Panc1 (cell line): ENCODE measurements at regions of chr10 and their contacts with region 1.

Region 1: DNA sequence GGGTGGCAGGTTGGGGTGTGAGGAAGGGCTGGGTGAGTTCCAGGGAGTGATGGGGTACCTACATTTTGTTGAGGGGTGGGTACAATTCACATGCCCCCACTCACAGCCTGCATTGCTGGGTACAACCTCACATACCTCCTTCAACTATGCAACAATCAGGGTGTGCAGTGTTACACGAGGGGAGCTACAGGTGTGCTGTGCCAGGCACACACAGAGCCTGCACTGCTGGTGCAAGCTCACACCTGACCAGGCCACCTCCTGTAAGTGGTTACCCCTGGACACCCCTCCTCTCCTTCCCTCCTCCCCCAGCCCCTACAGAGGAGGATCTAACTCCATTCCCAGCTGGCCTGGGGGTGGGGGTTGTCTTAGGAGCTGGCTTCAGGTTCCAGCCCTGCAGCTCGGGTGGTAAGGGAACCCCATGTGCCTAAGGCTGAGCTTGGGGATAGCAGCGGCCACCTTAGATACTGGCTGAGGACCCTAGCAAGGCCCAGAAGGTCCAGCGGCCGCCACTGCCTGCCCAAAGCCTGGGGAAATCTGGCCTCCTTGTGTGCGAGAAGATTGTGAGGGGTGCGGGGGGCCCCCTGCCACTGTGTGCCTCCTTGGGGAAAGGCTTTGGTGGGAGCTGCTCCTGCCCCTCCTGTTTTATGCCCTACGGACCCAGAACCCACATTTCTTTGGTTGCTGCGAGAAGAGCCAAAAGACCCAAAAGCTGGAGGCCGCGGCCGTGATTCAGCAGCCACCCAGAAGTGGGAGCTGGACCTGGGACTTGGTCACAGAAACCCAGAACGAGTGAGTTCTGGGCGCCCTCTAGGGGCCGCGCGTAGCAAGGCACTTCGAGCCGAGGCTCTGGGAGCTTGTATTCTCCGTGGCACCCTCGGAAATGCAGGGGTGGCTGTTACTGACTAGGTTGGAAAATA is 10.8 kb downstream of the TLX1 start:
- DNase-seq: peak; percentile 48
- ATAC-seq: peak; percentile 94
- H3K4me3 ChIP-seq: peak overlapping the region in 1 of 2 experiments; percentile 4; a peak in 1 of 4 replicates
- H3K27ac ChIP-seq: 0 out of 2 replicates have a peak overlapping the region, but pooled peaks have one; percentile 13
- H3K4me1 ChIP-seq: peaks cover 6% of the 10 kb centered on the region
- H3K27me3 ChIP-seq: no peaks in the 10 kb centered on the region
- CTCF ChIP-seq: peak; percentile 100

Region 2: GRCh38 chr10:100894033-100894432 is 247.8 kb before region 1 on chr10:
- CTCF ChIA-PET with region 1: no interaction called
- POLR2A ChIA-PET with region 1: interaction called, 14 read pairs
- in situ Hi-C with region 1: no loop called
- intact Hi-C with region 1: no loop called
- DNase-seq: no peak
- ATAC-seq: no peak
- H3K4me3 ChIP-seq: no peak overlapping the region
- H3K27ac ChIP-seq: no peak overlapping the region
- H3K4me1 ChIP-seq: peaks cover 6% of the 10 kb centered on the region
- H3K27me3 ChIP-seq: peaks cover 4% of the 10 kb centered on the region; the same call in 1 of the 2 replicates
- CTCF ChIP-seq: no peak

Region 3: DNA sequence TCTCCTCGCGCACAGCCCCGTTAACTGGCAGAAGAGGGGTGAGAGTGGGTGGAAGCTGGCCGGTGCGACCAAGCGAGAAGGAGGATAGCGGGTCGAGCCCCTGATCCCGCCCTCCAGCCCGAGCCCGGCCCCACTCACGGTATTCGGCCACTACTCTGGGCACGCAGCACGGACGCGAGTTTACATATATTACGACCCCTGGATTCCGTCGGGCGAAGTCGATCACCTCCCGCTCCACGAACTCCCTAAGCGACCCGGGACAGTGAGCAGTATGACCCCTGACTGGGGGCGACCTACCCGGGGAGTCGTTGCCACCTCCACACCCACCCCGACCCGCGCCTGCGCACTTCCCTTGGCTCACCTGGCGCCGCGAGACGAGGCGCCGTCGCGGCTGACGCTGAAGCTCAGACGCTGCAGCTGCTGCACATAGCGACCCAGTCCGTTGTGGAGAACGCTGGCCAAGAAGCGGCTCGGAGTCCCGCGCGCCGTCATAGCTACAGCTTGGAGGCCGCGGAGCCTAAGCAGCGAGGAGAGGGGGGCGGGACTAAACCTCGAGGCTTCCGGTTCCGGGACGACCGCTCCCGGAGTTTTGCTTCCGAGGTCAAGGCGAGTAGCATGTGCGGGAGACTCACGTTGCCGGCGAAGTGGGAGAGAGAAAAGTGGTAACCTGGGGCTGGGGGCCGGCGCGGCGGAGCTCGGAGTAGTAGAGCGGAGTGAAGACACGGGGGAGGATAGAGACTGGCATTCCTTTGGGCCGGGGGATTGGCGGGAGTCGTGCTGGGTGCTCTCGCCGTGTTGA is 154.7 kb before region 1 on chr10 and contains the starts of genes MRPL43 and TWNK:
- CTCF ChIA-PET with region 1: no interaction called
- POLR2A ChIA-PET with region 1: no interaction called
- in situ Hi-C with region 1: no loop called
- intact Hi-C with region 1: no loop called
- DNase-seq: no peak
- ATAC-seq: peak; percentile 95
- H3K4me3 ChIP-seq: peak within 1 kb of the TSS; percentile 84 to 98
- H3K27ac ChIP-seq: peak within 1 kb of the TSS; percentile 95
- H3K4me1 ChIP-seq: peaks cover 30% of the 10 kb centered on the region
- H3K27me3 ChIP-seq: no peaks in the 10 kb centered on the region
- CTCF ChIP-seq: no peak
- total RNA-seq, gene MRPL43: 108 TPM
- total RNA-seq, gene TWNK: 30.5 TPM

Region 4: GRCh38 chr10:101060036-101060950 is 81.6 kb before region 1 on chr10:
- CTCF ChIA-PET with region 1: interaction called, 33 read pairs
- POLR2A ChIA-PET with region 1: no interaction called
- in situ Hi-C with region 1: no loop called
- intact Hi-C with region 1: no loop called
- DNase-seq: peak; percentile 86
- ATAC-seq: peak; percentile 72
- H3K4me3 ChIP-seq: peak overlapping the region; percentile 76 to 77
- H3K27ac ChIP-seq: peak overlapping the region; percentile 99
- H3K4me1 ChIP-seq: peaks cover 44% of the 10 kb centered on the region
- H3K27me3 ChIP-seq: no peaks in the 10 kb centered on the region
- CTCF ChIP-seq: peak; percentile 98

Region 5: DNA sequence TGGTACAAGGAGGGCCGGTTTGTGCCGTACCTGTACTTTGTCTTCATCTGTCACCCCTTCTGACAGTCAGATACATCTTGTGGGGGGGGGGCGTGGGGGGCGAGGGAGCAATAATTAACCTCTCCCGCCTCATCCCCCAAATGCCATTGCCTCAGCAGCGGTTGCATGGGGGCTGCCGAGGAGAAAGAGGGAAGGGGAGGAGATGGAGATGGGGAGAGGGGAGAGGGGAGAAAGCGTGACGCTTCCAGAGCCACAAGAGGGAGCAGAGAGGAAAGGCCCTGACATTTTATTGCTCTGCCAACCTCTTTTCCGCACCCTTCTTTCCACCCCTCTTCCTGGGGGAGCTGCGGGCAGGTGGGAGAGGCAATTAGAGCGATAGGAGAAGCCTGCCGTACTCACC is 68.2 kb before region 1 on chr10:
- CTCF ChIA-PET with region 1: interaction called, 18 read pairs
- POLR2A ChIA-PET with region 1: interaction called, 3 read pairs
- in situ Hi-C with region 1: no loop called
- intact Hi-C with region 1: no loop called
- DNase-seq: no peak
- ATAC-seq: no peak
- H3K4me3 ChIP-seq: no peak overlapping the region
- H3K27ac ChIP-seq: no peak overlapping the region
- H3K4me1 ChIP-seq: no peaks in the 10 kb centered on the region
- H3K27me3 ChIP-seq: peaks cover 2% of the 10 kb centered on the region; the same call in 1 of the 2 replicates
- CTCF ChIP-seq: no peak; the same call in 1 of the 2 replicates

Region 6: DNA sequence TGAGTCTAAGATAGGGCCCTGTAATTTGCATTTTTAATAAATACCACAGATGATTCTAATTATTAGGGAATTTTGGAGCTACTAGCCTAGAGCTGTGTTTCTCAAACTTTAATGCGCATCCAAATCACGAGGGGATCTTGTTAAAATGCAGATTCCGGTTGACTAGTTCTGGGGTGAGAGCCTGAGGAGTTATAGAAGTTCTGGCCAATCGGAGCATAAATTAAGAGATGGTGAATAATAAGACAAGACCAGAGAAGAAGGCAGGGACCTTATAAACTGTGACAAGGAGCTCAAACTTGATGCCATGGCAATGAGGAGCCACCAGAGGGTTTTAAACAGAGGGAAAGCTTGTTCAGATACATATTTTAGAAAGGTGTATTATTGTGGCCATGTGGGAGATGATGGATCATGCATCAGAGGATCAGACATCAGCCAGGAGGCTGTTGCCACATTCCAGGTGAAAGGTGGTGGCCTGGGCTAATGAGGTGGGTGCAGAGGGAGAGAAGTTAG is 40.4 kb before region 1 on chr10:
- CTCF ChIA-PET with region 1: interaction called, 206 read pairs
- POLR2A ChIA-PET with region 1: interaction called, 6 read pairs
- in situ Hi-C with region 1: no loop called
- intact Hi-C with region 1: no loop called
- DNase-seq: no peak
- ATAC-seq: no peak; the same call in 1 of the 2 replicates
- H3K4me3 ChIP-seq: no peak overlapping the region
- H3K27ac ChIP-seq: no peak overlapping the region
- H3K4me1 ChIP-seq: no peaks in the 10 kb centered on the region
- H3K27me3 ChIP-seq: no peaks in the 10 kb centered on the region
- CTCF ChIP-seq: no peak

Region 7: GRCh38 chr10:101152316-101152715 is 10.4 kb after region 1 on chr10:
- CTCF ChIA-PET with region 1: interaction called, 14 read pairs
- POLR2A ChIA-PET with region 1: no interaction called
- in situ Hi-C with region 1: no loop called
- intact Hi-C with region 1: no loop called
- DNase-seq: no peak
- ATAC-seq: no peak
- H3K4me3 ChIP-seq: no peak overlapping the region
- H3K27ac ChIP-seq: no peak overlapping the region
- H3K4me1 ChIP-seq: no peaks in the 10 kb centered on the region
- H3K27me3 ChIP-seq: peaks cover 23% of the 10 kb centered on the region
- CTCF ChIP-seq: no peak